ENCODE measurements at regions of chr3 and their contacts with region 1.

Region 1: GRCh38 chr3:148718982-148719862 is 21.5 kb downstream of the AGTR1 start:
- DNase-seq: no peak

Region 2: DNA sequence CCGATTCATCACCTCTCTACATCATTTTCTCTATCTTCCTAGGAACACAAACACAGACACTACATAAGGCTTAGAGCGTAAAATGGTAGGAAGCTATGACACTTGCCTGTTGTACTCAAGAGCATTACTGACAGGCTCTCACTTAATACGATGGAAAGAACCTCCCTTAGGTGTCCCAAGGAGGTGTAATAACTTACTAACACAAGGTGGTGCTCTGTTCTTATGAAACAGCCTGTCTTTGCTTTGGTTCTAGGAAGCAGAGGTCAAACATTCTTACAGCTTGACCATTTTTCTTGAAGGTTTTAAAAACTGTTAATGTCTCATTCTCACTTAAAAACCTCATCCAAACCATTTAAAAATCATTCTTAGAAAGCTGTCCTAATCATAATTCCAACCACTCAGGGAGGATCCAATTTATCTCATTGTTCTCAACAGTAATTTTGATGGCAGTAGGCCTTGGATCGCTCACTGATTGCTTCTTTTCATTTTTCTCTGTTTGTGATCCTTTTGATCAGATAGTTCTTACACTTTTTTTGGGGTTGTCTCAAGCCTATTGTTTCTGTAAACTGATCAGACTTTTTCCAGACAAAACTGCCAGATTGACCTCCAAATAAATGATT is 339.3 kb before region 1 on chr3:
- intact Hi-C with region 1: loop called (anchors 5 kb)
- DNase-seq: no peak

Measured in cardiac septum (tissue), 1 donor.